Common myeloid progenitor, CD34-positive (primary cell): ENCODE measurements at regions of chr11 and their contacts with region 1.

Region 1: GRCh38 chr11:77154381-77155081 is 26.5 kb downstream of the MYO7A start:
- DNase-seq: peak in 2 of 3 donors; percentile 62 to 74
- H3K4me3 ChIP-seq: peak overlapping the region in 2 of 7 experiments; percentile 7 to 48
- H3K27ac ChIP-seq: no peak overlapping the region
- H3K4me1 ChIP-seq: peaks cover 10 to 64% (median 53%) of the 10 kb centered on the region in 4 experiments
- H3K27me3 ChIP-seq: peaks cover 0 to 3% (median 0%) of the 10 kb centered on the region in 5 experiments

Region 2: GRCh38 chr11:77175869-77176539 is 21.5 kb after region 1 on chr11:
- CTCF ChIA-PET with region 1: interaction called, 14 read pairs
- POLR2A ChIA-PET with region 1: no interaction called
- DNase-seq: peak in 2 of 3 donors; percentile 60 to 66
- H3K4me3 ChIP-seq: peak overlapping the region in 2 of 7 experiments; percentile 10 to 28
- H3K27ac ChIP-seq: no peak overlapping the region
- H3K4me1 ChIP-seq: peaks cover 2 to 36% (median 31%) of the 10 kb centered on the region in 4 experiments
- H3K27me3 ChIP-seq: no peaks in the 10 kb centered on the region

Region 3: DNA sequence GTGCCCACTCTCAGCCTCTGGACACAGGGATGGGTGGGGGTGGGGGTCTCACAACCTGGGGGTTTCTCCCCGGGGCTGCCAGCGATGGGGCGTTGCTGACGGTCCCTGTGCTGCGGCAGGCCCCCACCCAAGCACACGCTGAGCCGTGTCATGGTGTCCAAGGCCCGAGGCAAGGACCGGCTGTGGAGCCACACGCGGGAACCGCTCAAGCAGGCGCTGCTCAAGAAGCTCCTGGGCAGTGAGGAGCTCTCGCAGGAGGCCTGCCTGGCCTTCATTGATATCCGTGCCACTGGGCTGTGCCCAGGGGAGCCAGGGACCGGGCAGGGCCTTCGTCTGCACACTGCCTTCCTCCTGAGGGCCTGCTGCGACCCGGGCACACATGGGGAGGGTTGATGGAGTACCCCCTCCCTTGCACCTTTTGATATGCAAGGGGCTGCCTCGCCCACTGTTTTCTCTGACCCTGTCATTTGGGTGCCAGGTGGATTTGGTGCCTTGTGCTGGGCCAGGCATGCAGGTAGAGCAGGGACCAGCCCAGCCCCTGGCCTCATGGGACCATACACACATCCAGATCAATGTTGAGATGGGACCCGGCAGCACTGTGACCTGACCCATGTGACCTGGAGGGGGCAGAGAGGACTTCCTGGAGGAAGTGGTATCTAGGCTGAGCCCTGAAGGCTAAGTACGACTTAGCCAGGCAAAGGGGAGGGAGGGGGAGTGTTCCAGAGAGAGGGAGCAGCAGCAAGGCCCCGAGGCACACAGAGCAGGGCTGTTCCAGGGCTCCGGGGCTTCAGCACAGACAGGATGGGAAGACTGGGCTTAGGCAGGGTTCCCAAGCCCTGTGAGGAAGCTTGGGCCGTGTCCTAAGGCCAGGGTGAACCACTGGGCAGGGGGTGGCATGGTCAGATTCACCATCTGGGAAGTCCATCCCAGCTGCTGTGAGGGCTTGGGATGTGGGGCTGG is 48.7 kb after region 1 on chr11:
- CTCF ChIA-PET with region 1: no interaction called
- POLR2A ChIA-PET with region 1: no interaction called
- DNase-seq: no peak
- H3K4me3 ChIP-seq: no peak overlapping the region
- H3K27ac ChIP-seq: no peak overlapping the region
- H3K4me1 ChIP-seq: peaks cover 0 to 11% (median 3%) of the 10 kb centered on the region in 4 experiments
- H3K27me3 ChIP-seq: peaks cover 0 to 2% (median 0%) of the 10 kb centered on the region in 5 experiments